ENCODE measurements at regions of chr18 and their contacts with region 1.

Region 1: DNA sequence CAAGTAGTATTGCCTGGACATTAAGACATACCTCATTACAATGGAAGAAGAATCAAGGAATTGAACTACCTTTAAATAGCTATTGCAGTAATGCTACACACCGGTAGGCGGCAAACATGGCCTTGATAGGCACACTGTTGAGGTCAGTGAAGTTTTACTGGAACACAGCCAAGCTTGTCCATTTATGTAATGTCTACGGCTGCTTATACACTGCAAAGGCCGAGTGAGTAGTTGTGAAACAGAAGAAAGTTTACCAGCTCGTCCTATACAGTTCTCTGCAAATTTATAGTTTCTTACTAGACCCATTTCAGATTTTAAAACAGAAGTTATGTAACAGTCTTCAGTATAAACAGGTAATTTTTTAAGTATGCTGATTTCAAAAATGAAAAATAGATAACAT is 38.8 kb downstream of the PPP4R1 start:
- DNase-seq: peak; percentile 95
- ATAC-seq: peak; percentile 98
- H3K4me3 ChIP-seq: no peak overlapping the region
- H3K27ac ChIP-seq: peak overlapping the region; percentile 2; the same call in 1 of the 2 replicates
- H3K4me1 ChIP-seq: peaks cover 5% of the 10 kb centered on the region; the same call in 1 of the 2 replicates
- H3K27me3 ChIP-seq: no peaks in the 10 kb centered on the region
- CTCF ChIP-seq: peak; percentile 95

Region 2: DNA sequence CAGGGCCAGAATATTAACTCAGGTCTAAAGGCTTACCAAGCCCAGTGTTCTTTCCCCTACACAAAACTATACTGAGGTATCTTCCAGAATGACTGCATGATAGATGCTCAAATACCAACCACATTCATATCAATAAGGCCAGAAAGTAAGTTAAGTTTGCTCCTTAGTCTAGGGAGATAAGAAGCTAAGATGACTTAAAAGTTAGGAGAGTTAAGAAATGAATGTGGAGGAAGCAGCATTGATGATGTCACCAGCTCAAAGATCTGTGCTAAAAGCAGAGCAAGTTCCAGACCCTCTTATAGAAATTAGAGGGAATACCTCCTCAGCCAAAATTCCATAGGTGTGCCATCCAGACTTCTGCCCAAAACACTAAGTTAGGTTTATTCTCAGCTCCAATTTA is 32.7 kb after region 1 on chr18:
- CTCF ChIA-PET with region 1: interaction called, 9 read pairs
- POLR2A ChIA-PET with region 1: no interaction called
- intact Hi-C with region 1: loop called (anchors 1 kb)
- DNase-seq: no peak
- ATAC-seq: no peak
- H3K4me3 ChIP-seq: no peak overlapping the region; the same call in 1 of the 2 replicates
- H3K27ac ChIP-seq: peak overlapping the region; percentile 42
- H3K4me1 ChIP-seq: peaks cover 45% of the 10 kb centered on the region
- H3K27me3 ChIP-seq: no peaks in the 10 kb centered on the region
- CTCF ChIP-seq: no peak

Region 3: DNA sequence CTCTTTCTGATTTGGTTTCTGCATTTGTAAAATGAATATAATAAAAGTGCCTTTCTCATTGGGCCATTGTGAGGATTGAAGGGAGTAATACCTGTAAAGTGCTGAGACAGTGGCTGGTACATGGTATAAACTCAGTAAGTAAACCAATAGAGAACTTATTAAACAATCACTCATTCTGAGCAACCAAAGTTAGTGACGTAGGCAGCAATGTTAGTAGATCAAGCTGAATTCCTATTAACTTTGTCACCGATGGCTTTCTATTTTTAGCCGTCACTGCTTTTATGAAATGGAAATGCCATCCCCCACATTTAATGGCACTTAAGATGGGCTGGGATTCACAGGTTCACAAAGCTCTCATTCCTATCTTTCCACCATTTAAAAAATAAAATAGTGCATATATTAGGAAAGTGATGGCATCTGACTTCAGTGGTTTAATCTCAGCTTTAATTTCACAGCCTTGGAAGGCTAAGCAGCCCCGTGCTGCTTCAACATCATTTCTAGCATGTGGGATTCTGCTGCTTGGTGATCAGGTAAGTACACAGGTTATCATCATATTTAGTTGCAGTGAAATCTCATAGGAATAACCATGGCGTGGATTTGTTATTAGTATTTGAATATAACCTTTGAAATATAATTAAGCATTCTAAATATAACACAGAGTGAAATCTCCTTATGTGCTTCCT is 56.4 kb after region 1 on chr18:
- CTCF ChIA-PET with region 1: no interaction called
- POLR2A ChIA-PET with region 1: no interaction called
- intact Hi-C with region 1: no loop called
- DNase-seq: peak; percentile 97
- ATAC-seq: peak; percentile 100
- H3K4me3 ChIP-seq: peak overlapping the region; percentile 12; the same call in 1 of the 2 replicates
- H3K27ac ChIP-seq: peak overlapping the region; percentile 95
- H3K4me1 ChIP-seq: peaks cover 32% of the 10 kb centered on the region
- H3K27me3 ChIP-seq: no peaks in the 10 kb centered on the region
- CTCF ChIP-seq: no peak

Region 4: GRCh38 chr18:9673296-9674251 is 98.0 kb after region 1 on chr18:
- CTCF ChIA-PET with region 1: interaction called, 17 read pairs
- POLR2A ChIA-PET with region 1: interaction called, 5 read pairs
- intact Hi-C with region 1: loop called (anchors 1 kb)
- DNase-seq: peak; percentile 94
- ATAC-seq: peak; percentile 90
- H3K4me3 ChIP-seq: peak overlapping the region; percentile 3; the same call in 1 of the 2 replicates
- H3K27ac ChIP-seq: peak overlapping the region; percentile 94
- H3K4me1 ChIP-seq: peaks cover 19% of the 10 kb centered on the region
- H3K27me3 ChIP-seq: no peaks in the 10 kb centered on the region
- CTCF ChIP-seq: peak; percentile 65

Region 5: DNA sequence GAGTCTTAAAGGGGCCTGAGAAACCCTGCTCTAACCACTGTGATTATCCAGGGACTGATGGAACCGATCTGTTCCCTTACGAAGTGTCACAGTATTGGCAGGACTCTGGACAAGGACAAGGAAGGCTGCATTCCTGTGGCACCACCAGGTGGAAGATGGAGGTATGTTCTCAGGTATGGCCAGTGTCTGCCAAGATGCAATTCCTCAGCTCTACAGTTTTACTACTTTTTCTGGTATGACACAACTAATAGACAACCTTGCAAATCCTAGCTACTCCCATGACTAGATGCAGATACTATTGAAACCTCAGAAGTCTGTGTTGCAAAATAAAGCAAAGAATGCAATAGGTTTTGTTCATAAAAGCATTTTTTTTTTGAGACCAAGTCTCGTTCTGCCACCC is 147.1 kb after region 1 on chr18:
- CTCF ChIA-PET with region 1: no interaction called
- POLR2A ChIA-PET with region 1: no interaction called
- intact Hi-C with region 1: loop called (anchors 2 kb)
- DNase-seq: peak; percentile 83
- ATAC-seq: peak; percentile 60
- H3K4me3 ChIP-seq: no peak overlapping the region
- H3K27ac ChIP-seq: no peak overlapping the region
- H3K4me1 ChIP-seq: peaks cover 12% of the 10 kb centered on the region
- H3K27me3 ChIP-seq: no peaks in the 10 kb centered on the region
- CTCF ChIP-seq: peak; percentile 81

Region 6: DNA sequence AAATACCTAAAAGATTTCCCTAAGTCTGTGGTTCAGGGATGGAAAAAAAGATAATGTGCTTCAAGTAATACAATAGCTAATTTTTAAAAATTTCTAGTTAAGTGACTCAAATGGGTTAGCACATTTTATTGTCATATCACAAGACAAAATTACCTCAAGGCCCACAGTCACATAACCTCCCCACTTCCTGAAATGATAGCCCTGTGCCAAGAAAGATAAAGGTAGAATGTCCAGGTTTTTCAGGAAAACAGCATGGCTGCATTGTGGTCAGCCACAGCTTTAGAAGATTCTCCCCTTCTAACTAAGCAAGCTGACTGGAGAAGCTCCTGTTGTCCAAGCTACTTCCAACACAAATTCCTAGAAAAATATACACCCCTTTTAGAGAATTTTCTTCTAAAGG is 1906.7 kb after region 1 on chr18:
- CTCF ChIA-PET with region 1: no interaction called
- POLR2A ChIA-PET with region 1: no interaction called
- intact Hi-C with region 1: no loop called
- DNase-seq: no peak
- ATAC-seq: no peak
- H3K4me3 ChIP-seq: no peak overlapping the region
- H3K27ac ChIP-seq: no peak overlapping the region
- H3K4me1 ChIP-seq: no peaks in the 10 kb centered on the region
- H3K27me3 ChIP-seq: peaks cover 37% of the 10 kb centered on the region
- CTCF ChIP-seq: no peak